Right cardiac atrium (tissue), 5 donors: ENCODE measurements at regions of chr13 and their contacts with region 1.

Region 1: DNA sequence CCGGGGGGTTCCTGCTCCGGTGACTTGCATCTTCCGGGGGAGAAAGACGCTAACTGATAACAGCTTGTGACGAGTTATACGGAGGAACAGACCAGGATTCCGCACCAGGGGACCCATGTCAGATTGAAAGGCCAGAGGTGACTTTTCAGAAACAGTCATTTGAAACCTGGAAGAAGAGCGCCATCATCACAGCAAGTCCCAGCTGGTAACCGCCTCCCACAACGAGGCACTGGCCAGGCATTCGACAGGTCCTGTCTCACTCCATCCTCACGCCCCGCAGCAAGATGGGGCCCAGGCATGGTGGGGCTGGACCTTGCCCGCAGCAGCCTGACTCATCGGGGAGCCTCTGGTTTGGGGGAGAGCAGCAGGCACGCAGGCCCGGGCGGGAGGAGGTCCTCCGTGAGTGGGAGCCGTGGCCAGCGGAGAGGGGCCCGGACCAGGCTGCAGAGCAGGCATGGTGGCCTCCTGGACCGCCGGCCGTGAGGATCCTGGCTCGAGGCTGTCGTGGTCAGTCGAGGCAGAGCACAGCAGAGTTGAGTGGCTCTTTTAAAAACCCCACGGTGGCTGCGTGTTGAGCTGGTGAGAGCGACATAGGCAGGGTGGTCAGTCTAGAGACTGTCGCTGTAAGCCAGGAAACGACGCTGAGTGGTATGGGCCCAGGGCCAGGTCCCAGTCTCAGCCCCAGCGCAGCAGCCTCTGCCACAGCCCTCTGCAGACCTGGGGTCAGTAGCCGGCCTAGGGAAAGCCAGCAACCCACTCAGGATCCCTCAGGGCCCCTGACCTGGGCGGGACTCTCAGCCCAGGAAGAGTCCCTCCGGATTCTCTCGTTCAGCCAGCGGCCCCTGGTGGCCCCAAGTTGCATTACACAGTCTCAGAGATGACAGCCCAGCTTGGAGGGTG is 94.9 kb upstream of the MCF2L start:
- DNase-seq: peak; percentile 79 to 95 (median 89)
- ATAC-seq: peak; percentile 81 to 86
- H3K4me3 ChIP-seq: no peak overlapping the region
- H3K27ac ChIP-seq: no peak overlapping the region
- H3K4me1 ChIP-seq: no peaks in the 10 kb centered on the region
- H3K27me3 ChIP-seq: no peaks in the 10 kb centered on the region

Region 2: DNA sequence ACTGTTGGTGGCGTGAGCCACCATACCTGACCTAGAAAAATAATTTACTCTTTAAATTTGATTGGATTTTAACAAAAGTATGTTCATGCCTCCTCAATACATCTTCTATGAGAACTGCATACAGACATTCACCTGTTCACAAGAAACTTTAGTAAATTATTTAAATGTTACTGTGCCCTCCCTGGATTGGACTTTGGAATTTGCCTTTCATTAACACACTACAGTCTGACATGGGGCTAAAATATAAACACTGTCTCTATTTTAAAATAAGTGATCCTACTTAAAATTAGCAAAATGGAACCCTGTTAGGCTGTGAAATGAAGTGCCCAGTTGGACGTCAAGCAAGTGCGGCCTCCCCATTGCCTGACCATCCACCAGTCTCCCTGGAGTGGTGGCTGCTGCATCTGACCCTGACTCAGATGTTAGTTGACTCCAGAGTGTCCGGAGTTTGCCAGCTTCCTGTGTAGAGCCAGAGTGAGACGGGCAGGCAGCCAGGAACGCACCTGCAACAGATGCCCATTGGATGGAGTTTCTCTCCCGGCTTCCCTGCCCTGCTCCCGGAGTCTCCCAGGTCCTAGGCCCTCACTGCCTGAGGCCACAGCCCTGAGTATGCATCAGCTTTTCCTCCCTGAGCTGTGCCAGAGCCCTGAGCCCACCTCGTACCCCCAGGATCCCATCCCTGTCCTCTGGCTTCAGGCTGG is 230.2 kb before region 1 on chr13:
- intact Hi-C with region 1: loop called in 3 of 4 experiments (anchors 2 to 10 kb)
- DNase-seq: no peak
- ATAC-seq: no peak
- H3K4me3 ChIP-seq: no peak overlapping the region
- H3K27ac ChIP-seq: no peak overlapping the region
- H3K4me1 ChIP-seq: no peaks in the 10 kb centered on the region
- H3K27me3 ChIP-seq: no peaks in the 10 kb centered on the region

Region 3: DNA sequence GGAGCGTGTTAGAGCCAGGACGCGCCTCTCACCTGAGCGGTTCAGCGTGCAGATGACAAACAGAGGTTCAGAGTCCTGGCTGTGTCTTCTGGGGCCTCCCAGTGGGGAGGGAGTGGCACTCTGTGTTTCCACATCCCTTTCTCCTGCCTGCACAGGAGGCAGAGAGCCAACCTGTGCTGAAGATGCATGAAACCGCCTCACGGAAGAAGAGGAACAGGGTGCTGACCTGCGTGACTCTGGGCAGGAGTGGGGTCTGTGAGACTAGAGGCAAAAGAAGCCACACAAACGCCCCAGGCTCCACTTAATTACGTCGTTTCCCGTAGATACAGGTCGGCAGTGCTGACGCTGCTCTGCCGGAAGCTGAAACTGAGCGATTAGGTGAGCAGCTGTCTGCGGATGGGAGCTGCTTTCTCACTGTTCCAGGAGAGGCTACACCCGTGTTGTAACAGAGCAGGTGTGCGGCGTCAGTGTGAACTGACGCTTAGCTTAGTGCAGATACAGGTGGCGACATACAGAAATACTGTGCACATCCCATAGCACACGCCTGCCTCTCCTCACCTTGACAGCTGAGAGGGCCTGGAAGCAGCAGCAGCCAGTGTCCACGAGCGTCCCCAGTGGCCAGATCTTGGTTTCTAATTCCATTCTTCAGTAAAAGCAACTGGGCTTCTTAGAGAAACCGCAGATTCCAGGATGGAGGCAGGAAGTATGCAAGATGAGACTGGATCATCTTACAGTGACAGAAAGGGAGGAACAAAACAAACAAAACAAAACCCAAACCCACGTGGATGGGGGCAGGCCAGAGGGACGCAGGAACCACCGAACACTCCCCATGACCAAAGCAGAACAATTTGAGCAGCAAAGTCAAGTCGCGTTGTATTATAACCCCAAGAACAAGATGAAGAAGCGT is 57.2 kb after region 1 on chr13:
- intact Hi-C with region 1: no loop called
- DNase-seq: peak in 1 of 3 donors; percentile 72
- ATAC-seq: peak; percentile 32 to 64
- H3K4me3 ChIP-seq: no peak overlapping the region
- H3K27ac ChIP-seq: no peak overlapping the region
- H3K4me1 ChIP-seq: no peaks in the 10 kb centered on the region
- H3K27me3 ChIP-seq: no peaks in the 10 kb centered on the region